ENCODE measurements at regions of chr3 and their contacts with region 1.

Region 1: DNA sequence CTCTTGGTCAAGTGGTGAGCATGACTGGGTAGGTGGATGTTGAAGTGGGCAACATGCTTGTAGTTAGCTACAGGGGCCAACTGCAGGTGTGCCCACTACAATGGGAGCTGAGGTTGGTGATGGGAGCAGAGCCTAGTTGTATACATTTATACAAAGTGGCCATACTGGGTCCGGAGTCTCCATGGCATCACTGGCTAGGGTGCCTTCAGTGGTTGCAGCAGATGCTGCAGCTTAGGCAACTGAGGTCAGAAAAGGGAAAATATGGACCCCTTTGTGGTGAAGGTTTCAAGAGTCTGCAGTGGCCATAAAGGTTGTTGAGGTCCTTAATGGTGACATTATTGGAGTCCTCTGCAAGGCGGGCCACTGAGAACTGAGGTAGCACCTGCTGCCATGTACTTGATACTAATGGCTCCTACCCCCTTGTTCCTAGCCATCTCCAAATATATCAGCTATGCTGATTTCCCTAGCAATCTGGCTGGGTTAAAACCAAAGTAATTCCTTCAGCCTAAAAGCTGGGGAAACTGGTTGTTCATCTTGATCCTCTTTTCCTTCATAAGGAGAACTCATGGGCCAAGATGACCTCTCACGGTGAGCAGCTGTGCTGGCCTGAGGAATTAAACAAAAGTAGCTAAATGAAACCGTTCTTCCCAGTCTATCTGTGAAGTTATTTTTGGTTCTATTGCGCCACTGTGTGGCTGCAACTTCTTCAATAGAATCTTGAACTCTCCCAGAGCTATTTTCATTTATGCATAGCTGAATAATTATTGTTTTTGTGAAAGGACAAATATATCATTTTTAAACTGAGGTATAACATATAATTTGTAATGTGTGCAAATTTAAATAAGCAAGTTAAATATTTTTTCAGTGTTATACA is 76.0 kb upstream of the PLSCR4 start:
- DNase-seq: no peak
- ATAC-seq: peak; percentile 88
- H3K4me3 ChIP-seq: no peak overlapping the region
- H3K27ac ChIP-seq: no peak overlapping the region
- H3K4me1 ChIP-seq: no peaks in the 10 kb centered on the region
- H3K27me3 ChIP-seq: no peaks in the 10 kb centered on the region

Region 2: DNA sequence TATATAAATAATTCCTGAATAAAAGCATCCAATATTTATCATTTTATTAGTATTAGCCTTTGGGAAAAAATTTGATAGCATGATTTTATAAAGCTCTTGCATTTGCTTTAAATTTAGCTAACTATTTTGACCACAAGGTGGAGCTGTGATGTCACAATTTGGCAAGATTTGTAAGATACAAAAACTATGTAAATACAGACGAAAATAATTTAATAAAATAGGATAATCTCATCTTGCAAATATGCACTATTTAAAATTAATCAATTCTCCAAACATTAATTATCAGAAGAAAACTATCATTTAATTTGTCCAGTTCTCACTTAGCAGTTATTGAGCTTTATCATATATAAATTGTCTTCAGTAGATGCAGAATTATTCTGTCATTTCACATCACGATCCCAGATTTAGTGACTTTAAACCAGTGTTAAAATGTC is 261.3 kb before region 1 on chr3:
- intact Hi-C with region 1: loop called (anchors 2 to 5 kb)
- DNase-seq: no peak
- ATAC-seq: no peak
- H3K4me3 ChIP-seq: no peak overlapping the region
- H3K27ac ChIP-seq: no peak overlapping the region
- H3K4me1 ChIP-seq: no peaks in the 10 kb centered on the region
- H3K27me3 ChIP-seq: no peaks in the 10 kb centered on the region

Region 3: DNA sequence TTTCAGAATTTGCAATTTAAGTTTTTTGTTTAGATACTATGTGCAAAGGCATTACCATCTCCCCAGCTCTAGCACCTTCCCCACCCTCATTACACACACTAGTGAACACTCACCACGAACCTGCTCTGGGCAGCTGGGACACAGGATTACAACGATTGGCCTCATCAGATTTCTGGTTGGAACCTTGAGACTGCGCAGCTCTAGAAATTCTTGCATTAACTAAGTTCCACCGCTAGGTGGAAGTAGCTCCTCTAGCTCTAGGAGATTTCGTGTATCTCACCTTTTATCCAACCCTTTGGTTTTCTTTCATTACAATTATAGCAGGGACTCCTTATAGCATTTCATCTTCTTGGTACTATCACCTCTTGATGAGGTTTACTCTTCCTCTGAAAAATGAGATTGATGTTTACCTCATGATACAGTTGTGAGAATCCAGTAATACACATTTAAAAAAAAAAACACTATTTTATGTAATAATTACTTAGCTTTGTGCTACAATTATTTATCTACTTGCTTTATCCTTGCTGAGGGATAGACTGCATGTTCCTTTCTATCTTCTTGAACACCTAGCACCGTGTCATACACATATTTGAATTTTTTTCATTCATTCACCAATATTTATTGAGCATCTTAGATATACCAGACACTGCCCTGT is 137.3 kb before region 1 on chr3:
- intact Hi-C with region 1: loop called (anchors 5 kb)
- DNase-seq: no peak
- ATAC-seq: peak; percentile 88
- H3K4me3 ChIP-seq: no peak overlapping the region
- H3K27ac ChIP-seq: no peak overlapping the region
- H3K4me1 ChIP-seq: no peaks in the 10 kb centered on the region
- H3K27me3 ChIP-seq: no peaks in the 10 kb centered on the region

Region 4: DNA sequence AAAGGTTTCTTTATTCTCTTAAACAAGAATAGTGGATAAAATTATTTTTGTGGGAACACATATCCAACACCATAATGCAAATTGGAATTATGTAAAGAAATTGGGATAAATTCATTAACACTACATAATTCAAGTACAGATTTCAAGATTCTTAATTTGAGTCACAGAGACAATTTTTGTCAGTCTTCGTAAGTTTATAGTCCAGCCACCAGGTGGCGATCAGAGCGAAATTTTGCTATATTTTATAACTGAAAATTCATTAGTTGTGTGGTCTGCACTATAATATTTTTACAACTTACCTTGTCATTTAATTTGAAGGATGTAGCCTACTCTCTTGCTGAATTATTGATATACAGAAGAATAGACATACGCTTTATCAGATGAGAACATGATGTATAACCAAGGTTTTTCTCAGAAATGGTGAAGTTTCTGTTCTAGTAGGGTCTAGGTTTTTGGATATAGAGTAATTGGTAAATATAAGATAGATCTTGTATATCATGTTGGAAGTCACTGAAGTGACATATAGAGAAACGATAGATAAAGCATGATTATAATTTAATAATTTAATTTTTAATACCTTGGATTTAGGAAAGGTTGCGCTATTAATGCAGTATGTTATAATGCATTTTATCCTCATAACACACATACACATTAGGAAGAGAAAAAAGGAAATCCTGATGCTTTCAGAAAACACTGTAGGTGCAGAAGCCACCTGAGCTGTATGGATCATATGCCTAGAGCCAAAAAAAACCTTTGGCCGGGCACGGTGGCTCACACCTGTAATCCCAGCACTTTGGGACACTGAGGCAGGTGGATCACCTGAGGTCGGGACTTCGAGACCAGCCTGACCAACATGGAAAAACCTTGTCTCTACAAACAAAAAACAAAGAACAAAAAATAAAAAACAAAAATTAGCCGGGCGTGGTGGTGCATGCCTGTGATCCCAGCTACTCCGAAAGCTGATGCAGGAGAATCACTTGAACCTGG is 107.7 kb before region 1 on chr3:
- intact Hi-C with region 1: loop called (anchors 1 to 5 kb)
- DNase-seq: peak in 1 of 2 donors; percentile 75
- ATAC-seq: no peak
- H3K4me3 ChIP-seq: no peak overlapping the region
- H3K27ac ChIP-seq: no peak overlapping the region
- H3K4me1 ChIP-seq: peaks cover 5 to 13% of the 10 kb centered on the region in 2 donors
- H3K27me3 ChIP-seq: no peaks in the 10 kb centered on the region

Region 5: DNA sequence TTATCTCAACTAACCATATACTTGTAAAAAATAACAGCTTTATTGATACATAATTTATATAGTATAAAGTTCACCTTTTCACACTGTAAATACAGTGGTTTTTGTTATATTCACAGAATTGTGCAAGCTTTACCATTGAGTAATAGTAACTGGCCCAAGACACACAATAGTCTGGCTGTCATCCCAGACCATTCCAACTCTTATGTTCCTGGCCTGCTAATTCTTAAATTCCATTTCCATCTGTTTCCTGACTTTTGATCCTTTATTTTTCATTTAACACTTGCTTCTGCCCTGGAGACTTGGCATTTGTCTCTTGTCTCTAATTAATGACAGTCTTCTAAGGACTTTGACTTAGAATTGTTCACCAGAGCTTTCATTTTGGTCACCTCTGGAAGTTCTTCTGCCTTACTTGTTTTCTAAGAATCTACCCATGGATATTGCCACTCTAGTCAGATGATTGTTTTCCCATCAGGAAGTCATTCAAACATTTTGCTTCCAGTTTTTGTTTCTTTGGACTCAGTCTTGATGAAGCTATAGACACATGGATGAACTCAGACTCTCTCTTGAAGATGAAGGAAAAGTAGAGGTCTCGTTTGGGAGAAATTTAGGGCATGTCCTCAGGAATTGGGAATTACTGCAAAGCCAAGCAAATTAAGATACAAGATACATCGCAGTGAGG is 48.8 kb before region 1 on chr3:
- intact Hi-C with region 1: loop called in 1 of 2 experiments (anchors 5 kb)
- DNase-seq: no peak
- ATAC-seq: peak; percentile 81
- H3K4me3 ChIP-seq: no peak overlapping the region
- H3K27ac ChIP-seq: peak overlapping the region; percentile 76 to 90
- H3K4me1 ChIP-seq: peaks cover 2 to 10% of the 10 kb centered on the region in 2 donors
- H3K27me3 ChIP-seq: no peaks in the 10 kb centered on the region

Region 6: GRCh38 chr3:146308682-146309081 is 18.2 kb before region 1 on chr3:
- intact Hi-C with region 1: loop called in 1 of 2 experiments (anchors 1 kb)
- DNase-seq: no peak
- ATAC-seq: peak; percentile 76
- H3K4me3 ChIP-seq: no peak overlapping the region
- H3K27ac ChIP-seq: peak overlapping the region; percentile 28 to 87
- H3K4me1 ChIP-seq: peaks cover 2 to 3% of the 10 kb centered on the region in 2 donors
- H3K27me3 ChIP-seq: no peaks in the 10 kb centered on the region

Region 7: GRCh38 chr3:146469150-146470017 is 142.5 kb after region 1 on chr3 and contains the start of gene PLSCR2:
- intact Hi-C with region 1: no loop called
- DNase-seq: peak; percentile 82 to 88
- ATAC-seq: peak; percentile 87
- H3K4me3 ChIP-seq: peak within 1 kb of the TSS; percentile 22 to 50
- H3K27ac ChIP-seq: peak within 1 kb of the TSS in 1 of 2 donors; percentile 7
- H3K4me1 ChIP-seq: peaks cover 0 to 3% of the 10 kb centered on the region in 2 donors
- H3K27me3 ChIP-seq: no peaks in the 10 kb centered on the region
- total RNA-seq, gene PLSCR2: 1.0 to 1.4 TPM

Measured in aorta (tissue), 5 donors.